GM12878 (cell line): ENCODE measurements at regions of chr3 and their contacts with region 1.

Region 1: DNA sequence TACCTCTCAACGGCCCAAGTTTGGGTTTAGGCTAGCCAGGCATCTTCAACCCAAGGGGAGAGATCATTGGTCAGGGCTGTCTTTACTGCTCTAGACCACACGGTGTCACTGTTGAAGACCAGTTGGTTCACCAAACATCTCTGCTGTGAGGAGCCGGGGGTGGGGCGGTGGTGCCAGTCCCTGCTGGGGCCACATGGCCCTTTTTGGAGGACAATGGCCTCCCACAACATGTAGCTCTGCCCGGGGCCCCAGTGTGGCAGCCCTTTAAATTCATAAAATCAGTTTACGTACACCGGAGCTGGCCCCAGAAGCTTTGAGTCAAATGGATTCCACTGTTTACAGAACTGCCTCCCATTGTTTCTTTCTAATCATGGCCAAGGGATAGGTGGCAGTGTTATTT is 19.1 kb upstream of the TM4SF18 start:
- DNase-seq: no peak
- ATAC-seq: peak; percentile 99
- H3K4me3 ChIP-seq: no peak overlapping the region
- H3K27ac ChIP-seq: no peak overlapping the region
- H3K4me1 ChIP-seq: no peaks in the 10 kb centered on the region
- H3K27me3 ChIP-seq: peaks cover 5 to 6% of the 10 kb centered on the region in 2 experiments
- CTCF ChIP-seq: peak; percentile 68 to 81 (median 80)
- EP300 ChIP-seq: no peak
- POLR2A ChIP-seq: no peak
- RAD21 ChIP-seq: peak; percentile 76

Region 2: GRCh38 chr3:149373235-149374125 is 20.9 kb after region 1 on chr3:
- CTCF ChIA-PET with region 1: interaction called, 4 read pairs
- POLR2A ChIA-PET with region 1: no interaction called
- RAD21 ChIA-PET with region 1: no interaction called
- SMC1A ChIA-PET with region 1: no interaction called
- in situ Hi-C with region 1: no loop called
- intact Hi-C with region 1: loop called (anchors 2 kb)
- DNase-seq: no peak
- ATAC-seq: no peak
- H3K4me3 ChIP-seq: no peak overlapping the region
- H3K27ac ChIP-seq: no peak overlapping the region
- H3K4me1 ChIP-seq: no peaks in the 10 kb centered on the region
- H3K27me3 ChIP-seq: no peaks in the 10 kb centered on the region; a peak in 1 of 4 replicates
- CTCF ChIP-seq: no peak
- EP300 ChIP-seq: no peak
- POLR2A ChIP-seq: no peak
- RAD21 ChIP-seq: no peak

Region 3: DNA sequence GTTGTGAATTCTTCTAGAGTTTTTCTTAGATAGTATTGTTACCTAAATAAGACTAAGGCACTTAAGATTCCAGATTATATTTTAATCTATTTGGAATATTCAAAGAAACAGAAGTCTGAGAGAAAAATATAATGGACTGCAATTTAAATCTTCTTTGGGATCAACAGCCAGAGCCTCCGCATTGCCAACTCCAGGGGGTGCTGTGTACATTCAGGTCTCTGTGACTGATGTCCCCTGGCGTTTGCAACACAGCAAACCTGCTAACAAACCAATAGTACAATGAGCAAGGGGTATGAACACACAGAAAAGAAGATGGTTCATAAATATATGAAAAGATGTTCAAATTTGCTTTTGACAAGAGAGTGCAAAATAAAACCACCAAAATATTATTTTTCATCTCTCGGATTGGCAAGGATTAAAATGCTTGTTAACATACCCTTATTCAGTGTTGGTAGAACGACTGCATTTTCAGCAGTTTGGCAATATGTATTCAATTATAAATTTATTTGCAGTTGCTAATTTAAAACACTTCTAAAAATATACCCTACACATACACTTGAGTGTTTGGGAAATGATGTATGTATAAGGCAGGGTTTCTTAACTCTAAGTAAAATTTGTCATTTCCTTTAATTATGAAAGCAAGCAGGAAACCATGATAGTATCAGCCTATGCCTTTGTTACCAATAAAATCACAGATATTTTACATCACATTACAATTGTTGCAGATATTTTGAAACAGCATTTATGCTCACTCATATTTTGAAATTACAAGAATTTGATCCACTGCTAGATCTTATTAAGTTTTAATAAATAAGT is 41.0 kb after region 1 on chr3:
- CTCF ChIA-PET with region 1: no interaction called
- POLR2A ChIA-PET with region 1: no interaction called
- RAD21 ChIA-PET with region 1: no interaction called
- SMC1A ChIA-PET with region 1: interaction called, 3 read pairs
- in situ Hi-C with region 1: no loop called
- intact Hi-C with region 1: loop called (anchors 1 kb)
- DNase-seq: peak; percentile 15
- ATAC-seq: peak; percentile 99
- H3K4me3 ChIP-seq: no peak overlapping the region
- H3K27ac ChIP-seq: no peak overlapping the region
- H3K4me1 ChIP-seq: no peaks in the 10 kb centered on the region
- H3K27me3 ChIP-seq: no peaks in the 10 kb centered on the region
- CTCF ChIP-seq: peak; percentile 82 to 94 (median 86)
- EP300 ChIP-seq: no peak
- POLR2A ChIP-seq: no peak
- RAD21 ChIP-seq: peak; percentile 80

Region 4: DNA sequence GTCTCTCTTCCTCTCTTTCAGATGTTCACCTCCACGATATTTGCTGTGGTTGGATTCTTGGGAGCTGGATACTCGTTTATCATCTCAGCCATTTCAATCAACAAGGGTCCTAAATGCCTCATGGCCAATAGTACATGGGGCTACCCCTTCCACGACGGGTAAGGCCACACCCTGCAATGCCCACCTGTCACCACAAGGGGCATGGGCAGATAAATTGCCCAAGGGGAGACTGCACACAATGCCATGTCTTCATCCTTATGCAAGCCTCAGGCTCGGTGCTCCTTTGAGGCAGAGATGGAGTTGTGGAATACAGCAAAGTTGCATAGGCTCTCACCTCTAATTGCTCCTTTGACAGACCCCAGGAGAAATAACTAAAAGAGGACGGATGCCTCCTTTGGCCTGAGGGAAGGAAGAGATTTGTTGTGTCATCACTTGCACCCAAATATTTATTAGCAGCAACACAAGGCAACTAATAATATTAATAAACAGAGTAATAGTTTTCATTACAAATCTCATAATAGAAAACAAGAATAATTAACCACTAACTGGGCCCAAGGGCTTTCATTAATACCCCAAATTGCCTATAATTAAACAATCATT is 135.1 kb after region 1 on chr3:
- CTCF ChIA-PET with region 1: interaction called, 51 read pairs
- POLR2A ChIA-PET with region 1: no interaction called
- RAD21 ChIA-PET with region 1: no interaction called
- SMC1A ChIA-PET with region 1: interaction called, 7 read pairs
- in situ Hi-C with region 1: loop called (anchors 5 kb)
- intact Hi-C with region 1: no loop called
- DNase-seq: no peak
- ATAC-seq: peak; percentile 96
- H3K4me3 ChIP-seq: no peak overlapping the region
- H3K27ac ChIP-seq: no peak overlapping the region
- H3K4me1 ChIP-seq: no peaks in the 10 kb centered on the region
- H3K27me3 ChIP-seq: no peaks in the 10 kb centered on the region
- CTCF ChIP-seq: peak; percentile 56 to 88 (median 87)
- EP300 ChIP-seq: no peak
- POLR2A ChIP-seq: no peak
- RAD21 ChIP-seq: no peak